B cell (primary cell): ENCODE measurements at regions of chr20 and their contacts with region 1.

Region 1: DNA sequence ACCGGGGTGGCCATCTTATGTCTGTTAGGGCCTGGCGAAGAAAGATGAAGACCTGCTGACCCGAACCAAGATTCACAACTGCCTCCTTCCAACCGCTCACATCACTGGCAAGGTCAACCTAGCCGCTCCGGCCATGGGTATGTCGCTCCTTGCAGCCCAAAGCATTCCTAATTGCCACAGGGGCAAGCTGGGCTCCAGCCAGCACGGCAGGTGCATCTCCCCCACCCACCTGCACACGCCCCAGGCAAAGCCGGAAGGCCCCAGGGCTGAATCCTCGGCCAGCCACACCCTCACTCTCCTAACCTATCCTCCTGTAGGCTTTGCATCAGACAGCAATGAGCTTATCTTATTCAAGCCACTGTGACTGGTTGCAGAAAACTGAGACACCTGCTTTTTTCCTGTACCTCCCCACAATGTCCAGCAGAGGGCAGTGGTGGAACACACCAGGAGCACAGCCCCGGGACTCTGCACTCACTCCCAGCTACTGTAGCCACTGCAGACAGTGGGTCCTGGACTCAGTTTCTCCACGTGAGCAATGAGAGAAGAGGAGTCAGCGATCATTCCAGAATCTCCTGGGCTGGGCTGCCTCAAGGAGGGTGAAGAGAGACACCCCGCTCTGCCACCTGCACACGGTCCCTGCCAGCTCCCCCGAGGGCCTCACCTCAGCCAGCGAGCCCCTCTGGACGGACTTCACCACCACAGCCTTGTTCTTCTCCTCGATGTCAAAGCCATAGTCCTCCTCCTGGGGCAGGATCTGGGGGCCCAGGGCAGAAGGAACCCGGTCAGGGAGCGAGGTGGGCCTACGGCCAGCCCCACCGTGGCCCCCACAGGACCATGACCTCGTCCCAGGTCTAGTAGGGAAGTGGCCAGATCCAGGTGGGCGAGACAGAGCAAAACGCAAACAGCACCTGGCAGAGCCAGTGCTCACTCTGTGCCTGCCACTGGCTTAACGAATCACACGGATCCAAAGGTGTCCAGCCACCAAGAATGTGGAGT is 170.0 kb downstream of the PREX1 start:
- DNase-seq: peak; percentile 82
- ATAC-seq: peak; percentile 93
- H3K4me3 ChIP-seq: no peak overlapping the region
- H3K4me3 Mint-ChIP-seq: no peak overlapping the region
- H3K27ac ChIP-seq: no peak overlapping the region
- H3K27ac Mint-ChIP-seq: peak overlapping the region; percentile 39
- H3K4me1 ChIP-seq: peaks cover 0 to 3% of the 10 kb centered on the region in 2 donors
- H3K4me1 Mint-ChIP-seq: peaks cover 10% of the 10 kb centered on the region
- H3K27me3 ChIP-seq: no peaks in the 10 kb centered on the region
- H3K27me3 Mint-ChIP-seq: no peaks in the 10 kb centered on the region
- CTCF ChIP-seq: peak; percentile 96

Region 2: DNA sequence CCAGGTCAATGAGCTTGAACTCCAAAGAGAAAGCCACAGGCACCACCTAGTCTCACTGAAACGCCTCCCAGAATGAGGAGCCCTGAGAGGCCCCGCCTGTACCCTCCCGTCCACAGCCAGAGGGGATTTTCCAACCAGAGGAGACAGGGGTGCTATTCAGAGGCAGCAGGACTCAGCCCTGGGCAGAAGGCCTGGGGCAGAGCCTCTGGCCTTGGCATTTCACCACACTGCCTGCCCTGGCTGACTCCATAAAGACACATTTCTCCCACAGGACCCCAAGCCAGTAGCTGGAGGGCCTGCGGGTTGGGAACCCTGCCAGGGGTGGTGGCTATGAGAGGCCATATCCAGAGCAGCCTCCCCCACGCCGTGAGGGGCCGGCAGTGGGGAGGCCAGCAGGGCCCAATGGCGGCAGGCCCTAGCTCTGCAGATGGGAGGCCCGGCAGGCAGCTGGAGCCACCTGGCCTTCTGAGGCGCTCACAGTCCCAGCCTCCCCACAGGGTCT is 10.7 kb after region 1 on chr20:
- CTCF ChIA-PET with region 1: interaction called, 11 read pairs
- POLR2A ChIA-PET with region 1: no interaction called
- intact Hi-C with region 1: no loop called
- DNase-seq: no peak
- ATAC-seq: no peak
- H3K4me3 ChIP-seq: no peak overlapping the region
- H3K4me3 Mint-ChIP-seq: no peak overlapping the region
- H3K27ac ChIP-seq: no peak overlapping the region
- H3K27ac Mint-ChIP-seq: no peak overlapping the region
- H3K4me1 ChIP-seq: no peaks in the 10 kb centered on the region
- H3K4me1 Mint-ChIP-seq: no peaks in the 10 kb centered on the region
- H3K27me3 ChIP-seq: no peaks in the 10 kb centered on the region
- H3K27me3 Mint-ChIP-seq: no peaks in the 10 kb centered on the region
- CTCF ChIP-seq: no peak

Region 3: GRCh38 chr20:48711693-48712456 is 54.1 kb after region 1 on chr20:
- CTCF ChIA-PET with region 1: interaction called, 13 read pairs
- POLR2A ChIA-PET with region 1: no interaction called
- intact Hi-C with region 1: no loop called
- DNase-seq: no peak
- ATAC-seq: no peak
- H3K4me3 ChIP-seq: peak overlapping the region in 1 of 5 experiments; percentile 14
- H3K4me3 Mint-ChIP-seq: peak overlapping the region; percentile 55
- H3K27ac ChIP-seq: peak overlapping the region; percentile 45 to 68
- H3K27ac Mint-ChIP-seq: peak overlapping the region; percentile 85
- H3K4me1 ChIP-seq: peaks cover 41 to 78% of the 10 kb centered on the region in 2 donors
- H3K4me1 Mint-ChIP-seq: peaks cover 70% of the 10 kb centered on the region
- H3K27me3 ChIP-seq: no peaks in the 10 kb centered on the region
- H3K27me3 Mint-ChIP-seq: no peaks in the 10 kb centered on the region
- CTCF ChIP-seq: no peak

Region 4: DNA sequence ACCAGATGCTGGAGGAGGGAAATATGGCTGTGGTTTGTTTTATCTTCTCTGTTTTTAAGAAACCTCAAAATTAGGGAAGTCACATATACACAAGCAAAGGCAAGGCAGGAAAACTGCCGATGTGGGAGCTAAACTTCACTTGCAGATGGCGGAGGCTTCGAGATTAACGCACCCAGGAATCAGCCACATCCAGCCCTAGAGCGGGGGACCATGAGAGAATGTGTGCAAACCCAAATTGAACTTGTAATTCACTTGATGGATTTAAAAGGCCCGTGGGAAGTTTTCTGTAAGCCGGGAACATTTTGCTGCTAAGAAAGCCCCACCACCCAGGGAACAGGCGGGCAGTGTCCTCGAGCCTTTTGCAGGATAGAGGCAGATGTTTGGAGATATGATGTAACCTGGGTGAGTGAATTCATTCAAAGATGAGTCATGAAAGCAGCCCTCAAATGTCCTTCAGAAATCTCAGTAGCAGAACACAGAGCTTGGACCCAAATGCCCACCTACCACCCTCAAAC is 130.1 kb after region 1 on chr20:
- CTCF ChIA-PET with region 1: interaction called, 13 read pairs
- POLR2A ChIA-PET with region 1: no interaction called
- intact Hi-C with region 1: no loop called
- DNase-seq: peak; percentile 60
- ATAC-seq: no peak
- H3K4me3 ChIP-seq: peak overlapping the region in 1 of 5 experiments; percentile 23
- H3K4me3 Mint-ChIP-seq: peak overlapping the region; percentile 63
- H3K27ac ChIP-seq: peak overlapping the region; percentile 74 to 80
- H3K27ac Mint-ChIP-seq: peak overlapping the region; percentile 94
- H3K4me1 ChIP-seq: peaks cover 75 to 86% of the 10 kb centered on the region in 2 donors
- H3K4me1 Mint-ChIP-seq: peaks cover 74% of the 10 kb centered on the region
- H3K27me3 ChIP-seq: no peaks in the 10 kb centered on the region
- H3K27me3 Mint-ChIP-seq: no peaks in the 10 kb centered on the region
- CTCF ChIP-seq: no peak

Region 5: DNA sequence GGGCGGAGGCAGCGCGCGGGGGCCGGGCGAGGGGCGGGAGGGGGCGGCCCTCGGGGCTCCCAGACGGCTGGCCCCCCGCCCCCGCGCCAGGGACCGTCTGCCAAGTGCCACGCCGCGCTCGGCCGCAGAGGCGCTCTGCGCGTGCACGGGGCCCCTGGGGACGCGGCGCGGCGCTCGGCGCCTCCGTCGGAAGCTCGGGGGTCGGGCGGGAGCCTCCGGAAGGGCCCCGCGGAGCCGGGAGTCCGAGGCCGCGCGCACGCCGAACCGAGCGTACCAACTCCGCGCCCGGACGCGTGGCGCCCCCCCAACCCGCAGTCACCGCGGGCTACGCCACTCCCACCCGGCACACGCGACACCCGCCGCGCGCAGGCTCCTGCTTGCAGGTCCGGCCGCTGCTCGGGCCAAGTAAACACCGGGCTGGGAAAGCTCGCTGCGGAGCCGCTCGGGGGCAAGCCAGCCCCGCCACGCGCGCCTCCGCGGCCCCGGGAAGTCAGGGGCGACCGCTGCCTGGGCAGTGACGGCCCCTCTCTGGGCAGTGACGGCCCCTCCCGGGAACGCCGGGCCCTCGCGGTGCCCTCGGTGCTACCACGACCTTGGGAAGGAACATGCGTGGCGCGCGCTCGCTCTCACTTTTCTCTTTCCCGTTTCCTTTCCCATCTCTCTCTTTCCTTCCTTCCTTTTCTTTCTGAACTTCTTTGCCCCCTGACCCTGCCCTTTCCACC is 170.4 kb after region 1 on chr20:
- CTCF ChIA-PET with region 1: interaction called, 18 read pairs
- POLR2A ChIA-PET with region 1: interaction called, 3 read pairs
- intact Hi-C with region 1: loop called (anchors 5 kb)
- DNase-seq: peak; percentile 93
- ATAC-seq: peak; percentile 78
- H3K4me3 ChIP-seq: peak overlapping the region in 4 of 5 experiments; percentile 34 to 68 (median 56)
- H3K4me3 Mint-ChIP-seq: peak overlapping the region; percentile 89
- H3K27ac ChIP-seq: peak overlapping the region in 1 of 2 donors; percentile 66
- H3K27ac Mint-ChIP-seq: peak overlapping the region; percentile 87
- H3K4me1 ChIP-seq: peaks cover 51 to 62% of the 10 kb centered on the region in 2 donors
- H3K4me1 Mint-ChIP-seq: peaks cover 67% of the 10 kb centered on the region
- H3K27me3 ChIP-seq: no peaks in the 10 kb centered on the region
- H3K27me3 Mint-ChIP-seq: no peaks in the 10 kb centered on the region
- CTCF ChIP-seq: no peak

Region 6: GRCh38 chr20:48875911-48876640 is 218.3 kb after region 1 on chr20:
- CTCF ChIA-PET with region 1: interaction called, 60 read pairs
- POLR2A ChIA-PET with region 1: no interaction called
- intact Hi-C with region 1: loop called (anchors 1 kb)
- DNase-seq: no peak
- ATAC-seq: peak; percentile 77
- H3K4me3 ChIP-seq: no peak overlapping the region
- H3K4me3 Mint-ChIP-seq: peak overlapping the region; percentile 38
- H3K27ac ChIP-seq: no peak overlapping the region
- H3K27ac Mint-ChIP-seq: peak overlapping the region; percentile 78
- H3K4me1 ChIP-seq: peaks cover 11 to 13% of the 10 kb centered on the region in 2 donors
- H3K4me1 Mint-ChIP-seq: peaks cover 36% of the 10 kb centered on the region
- H3K27me3 ChIP-seq: no peaks in the 10 kb centered on the region
- H3K27me3 Mint-ChIP-seq: no peaks in the 10 kb centered on the region
- CTCF ChIP-seq: no peak

Region 7: GRCh38 chr20:48904365-48905296 is 246.9 kb after region 1 on chr20:
- CTCF ChIA-PET with region 1: interaction called, 297 read pairs
- POLR2A ChIA-PET with region 1: interaction called, 4 read pairs
- intact Hi-C with region 1: no loop called
- DNase-seq: peak; percentile 81
- ATAC-seq: peak; percentile 78
- H3K4me3 ChIP-seq: no peak overlapping the region
- H3K4me3 Mint-ChIP-seq: peak overlapping the region; percentile 19
- H3K27ac ChIP-seq: no peak overlapping the region
- H3K27ac Mint-ChIP-seq: no peak overlapping the region
- H3K4me1 ChIP-seq: peaks cover 6 to 7% of the 10 kb centered on the region in 2 donors
- H3K4me1 Mint-ChIP-seq: peaks cover 10% of the 10 kb centered on the region
- H3K27me3 ChIP-seq: no peaks in the 10 kb centered on the region
- H3K27me3 Mint-ChIP-seq: no peaks in the 10 kb centered on the region
- CTCF ChIP-seq: peak; percentile 90